ENCODE measurements at regions of chr5 and their contacts with region 1.

Region 1: DNA sequence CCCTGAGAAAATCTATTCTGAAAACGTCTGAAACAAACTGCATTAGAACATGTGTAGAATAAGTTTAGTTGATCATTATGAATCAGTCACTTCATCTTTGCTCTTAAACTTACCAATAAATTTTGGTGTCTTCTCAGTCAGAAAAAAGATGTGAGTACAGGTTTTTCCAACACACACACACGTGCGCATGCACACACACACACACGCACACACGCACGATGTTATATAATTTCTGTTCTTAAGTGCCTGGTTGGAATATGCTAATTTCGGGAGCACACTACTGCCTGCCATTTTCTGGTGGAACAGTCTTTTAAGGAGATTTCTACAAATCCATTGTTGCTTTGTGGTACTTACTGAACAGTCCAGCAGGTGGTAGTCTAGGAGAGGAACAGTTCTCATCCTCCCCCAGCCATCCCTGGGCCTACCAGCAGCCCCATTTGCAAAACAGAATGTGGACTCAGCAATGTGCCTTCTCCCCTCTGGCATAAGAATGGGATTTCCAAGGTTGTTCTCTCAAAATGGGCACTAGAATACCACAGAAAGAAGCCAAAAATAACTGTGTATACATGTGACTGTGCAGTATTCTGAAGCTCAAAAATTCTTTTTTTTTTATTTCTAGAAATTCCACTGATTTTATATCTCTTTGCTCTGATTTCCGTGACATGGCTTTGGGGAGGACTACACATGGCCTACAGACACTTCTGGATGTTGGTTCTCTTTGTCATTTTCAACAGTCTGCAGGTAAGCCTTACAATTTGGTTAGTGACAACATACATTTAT is 281.3 kb downstream of the ARRDC3 start:
- DNase-seq: peak; percentile 67
- ATAC-seq: peak; percentile 98
- H3K4me3 ChIP-seq: no peak overlapping the region
- H3K27ac ChIP-seq: no peak overlapping the region
- H3K4me1 ChIP-seq: 0 out of 2 replicates have a peak, but pooled peaks cover 3% of the 10 kb centered on the region
- H3K27me3 ChIP-seq: no peaks in the 10 kb centered on the region
- CTCF ChIP-seq: peak; percentile 86

Region 2: GRCh38 chr5:90866333-90866732 is 235.5 kb before region 1 on chr5:
- CTCF ChIA-PET with region 1: no interaction called
- POLR2A ChIA-PET with region 1: no interaction called
- in situ Hi-C with region 1: no loop called
- intact Hi-C with region 1: loop called (anchors 10 kb)
- DNase-seq: peak; percentile 17
- ATAC-seq: peak; percentile 80; the same call in 1 of the 2 replicates
- H3K4me3 ChIP-seq: no peak overlapping the region
- H3K27ac ChIP-seq: no peak overlapping the region
- H3K4me1 ChIP-seq: no peaks in the 10 kb centered on the region
- H3K27me3 ChIP-seq: peaks cover 2% of the 10 kb centered on the region; the same call in 1 of the 2 replicates
- CTCF ChIP-seq: peak; percentile 56; the same call in 1 of the 2 replicates

Region 3: DNA sequence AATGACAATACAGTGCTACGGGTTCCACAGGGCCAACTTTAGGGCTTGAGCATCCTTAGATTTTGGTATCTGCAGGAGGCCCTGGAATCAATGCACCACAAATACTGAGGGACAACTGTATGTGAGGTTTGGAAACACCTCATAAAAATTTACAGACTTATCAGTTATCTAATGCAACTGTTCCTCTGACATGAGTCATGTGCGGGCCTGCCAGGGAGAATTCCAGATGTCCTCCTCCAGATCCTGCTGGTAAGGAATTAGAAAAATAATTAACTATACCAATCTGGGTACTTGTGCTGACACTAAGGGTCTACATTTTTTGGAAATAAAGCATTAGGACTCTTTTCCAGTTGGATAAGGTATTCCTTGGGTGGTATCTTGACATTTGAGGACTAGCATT is 52.0 kb before region 1 on chr5:
- CTCF ChIA-PET with region 1: no interaction called
- POLR2A ChIA-PET with region 1: no interaction called
- in situ Hi-C with region 1: no loop called
- intact Hi-C with region 1: no loop called
- DNase-seq: no peak
- ATAC-seq: peak; percentile 74
- H3K4me3 ChIP-seq: no peak overlapping the region
- H3K27ac ChIP-seq: peak overlapping the region; percentile 65
- H3K4me1 ChIP-seq: peaks cover 8% of the 10 kb centered on the region; the same call in 1 of the 2 replicates
- H3K27me3 ChIP-seq: no peaks in the 10 kb centered on the region
- CTCF ChIP-seq: no peak

Region 4: GRCh38 chr5:91225848-91226686 is 124.3 kb after region 1 on chr5:
- CTCF ChIA-PET with region 1: no interaction called
- POLR2A ChIA-PET with region 1: no interaction called
- in situ Hi-C with region 1: no loop called
- intact Hi-C with region 1: loop called (anchors 5 kb)
- DNase-seq: peak; percentile 38
- ATAC-seq: peak; percentile 89
- H3K4me3 ChIP-seq: no peak overlapping the region
- H3K27ac ChIP-seq: no peak overlapping the region
- H3K4me1 ChIP-seq: no peaks in the 10 kb centered on the region
- H3K27me3 ChIP-seq: no peaks in the 10 kb centered on the region
- CTCF ChIP-seq: peak; percentile 80

Region 5: GRCh38 chr5:91311697-91312501 is 210.1 kb after region 1 on chr5:
- CTCF ChIA-PET with region 1: no interaction called
- POLR2A ChIA-PET with region 1: no interaction called
- in situ Hi-C with region 1: no loop called
- intact Hi-C with region 1: loop called (anchors 10 kb)
- DNase-seq: peak; percentile 97
- ATAC-seq: peak; percentile 94
- H3K4me3 ChIP-seq: no peak overlapping the region
- H3K27ac ChIP-seq: peak overlapping the region; percentile 91
- H3K4me1 ChIP-seq: peaks cover 42% of the 10 kb centered on the region
- H3K27me3 ChIP-seq: no peaks in the 10 kb centered on the region
- CTCF ChIP-seq: no peak

Measured in Panc1 (cell line).